Heart left ventricle (tissue), 16 donors: ENCODE measurements at regions of chr2 and their contacts with region 1.

Region 1: GRCh38 chr2:10408649-10409579 is 39.2 kb downstream of the ODC1 start:
- DNase-seq: peak; percentile 74 to 88 (median 80)
- ATAC-seq: peak; percentile 51 to 75 (median 62)
- H3K4me3 ChIP-seq: peak overlapping the region in 1 of 12 donors; percentile 15
- H3K27ac ChIP-seq: peak overlapping the region in 10 of 12 donors; percentile 14 to 85 (median 46)
- H3K4me1 ChIP-seq: peaks cover 16 to 71% (median 54%) of the 10 kb centered on the region in 12 donors
- H3K27me3 ChIP-seq: no peaks in the 10 kb centered on the region
- CTCF ChIP-seq: peak; percentile 89 to 98 (median 95)
- POLR2A ChIP-seq: no peak

Region 2: DNA sequence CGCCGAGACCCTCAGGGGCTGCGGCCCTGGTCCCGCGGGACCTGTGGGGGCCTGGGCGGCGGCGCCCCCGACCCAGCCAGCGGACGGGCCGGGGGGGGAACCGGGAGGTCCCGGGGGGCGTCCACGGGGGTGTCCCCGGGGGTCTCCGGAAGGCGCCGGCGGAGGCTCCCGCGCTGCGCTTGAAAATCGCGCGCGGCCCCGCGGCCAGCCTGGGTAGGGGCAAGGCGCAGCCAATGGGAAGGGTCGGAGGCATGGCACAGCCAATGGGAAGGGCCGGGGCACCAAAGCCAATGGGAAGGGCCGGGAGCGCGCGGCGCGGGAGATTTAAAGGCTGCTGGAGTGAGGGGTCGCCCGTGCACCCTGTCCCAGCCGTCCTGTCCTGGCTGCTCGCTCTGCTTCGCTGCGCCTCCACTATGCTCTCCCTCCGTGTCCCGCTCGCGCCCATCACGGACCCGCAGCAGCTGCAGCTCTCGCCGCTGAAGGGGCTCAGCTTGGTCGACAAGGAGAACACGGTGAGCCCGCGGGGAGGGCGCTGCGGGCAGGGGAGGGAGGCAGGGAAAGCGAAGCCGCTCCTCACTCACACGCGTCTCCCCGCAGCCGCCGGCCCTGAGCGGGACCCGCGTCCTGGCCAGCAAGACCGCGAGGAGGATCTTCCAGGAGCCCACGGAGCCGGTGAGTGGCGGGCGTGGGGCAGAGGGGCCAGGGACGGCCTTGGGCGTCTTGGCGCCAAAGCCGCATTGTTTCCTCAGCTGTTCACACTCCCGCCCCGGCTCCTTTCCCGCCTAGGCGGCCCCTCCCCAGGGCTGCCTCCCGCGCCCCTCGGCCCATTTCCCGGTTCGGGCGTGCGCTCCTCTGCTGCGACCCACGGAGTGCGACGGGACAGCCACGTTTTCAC is 286.3 kb before region 1 on chr2 and contains the start of gene RRM2:
- intact Hi-C with region 1: loop called in 5 of 10 experiments (anchors 2 to 5 kb)
- DNase-seq: peak; percentile 92 to 96 (median 94)
- ATAC-seq: peak; percentile 90 to 94 (median 93)
- H3K4me3 ChIP-seq: peak within 1 kb of the TSS; percentile 35 to 79 (median 54)
- H3K27ac ChIP-seq: no peak within 1 kb of the TSS
- H3K4me1 ChIP-seq: peaks cover 10 to 66% (median 21%) of the 10 kb centered on the region in 12 donors
- H3K27me3 ChIP-seq: peaks cover 8 to 24% (median 12%) of the 10 kb centered on the region in 9 donors
- CTCF ChIP-seq: peak in 2 of 12 donors; percentile 8 to 11
- POLR2A ChIP-seq: no peak
- total RNA-seq, gene RRM2: 0.09 to 32.6 (median 1.3) TPM in 8 of 9 donors, not detected in the other

Region 3: DNA sequence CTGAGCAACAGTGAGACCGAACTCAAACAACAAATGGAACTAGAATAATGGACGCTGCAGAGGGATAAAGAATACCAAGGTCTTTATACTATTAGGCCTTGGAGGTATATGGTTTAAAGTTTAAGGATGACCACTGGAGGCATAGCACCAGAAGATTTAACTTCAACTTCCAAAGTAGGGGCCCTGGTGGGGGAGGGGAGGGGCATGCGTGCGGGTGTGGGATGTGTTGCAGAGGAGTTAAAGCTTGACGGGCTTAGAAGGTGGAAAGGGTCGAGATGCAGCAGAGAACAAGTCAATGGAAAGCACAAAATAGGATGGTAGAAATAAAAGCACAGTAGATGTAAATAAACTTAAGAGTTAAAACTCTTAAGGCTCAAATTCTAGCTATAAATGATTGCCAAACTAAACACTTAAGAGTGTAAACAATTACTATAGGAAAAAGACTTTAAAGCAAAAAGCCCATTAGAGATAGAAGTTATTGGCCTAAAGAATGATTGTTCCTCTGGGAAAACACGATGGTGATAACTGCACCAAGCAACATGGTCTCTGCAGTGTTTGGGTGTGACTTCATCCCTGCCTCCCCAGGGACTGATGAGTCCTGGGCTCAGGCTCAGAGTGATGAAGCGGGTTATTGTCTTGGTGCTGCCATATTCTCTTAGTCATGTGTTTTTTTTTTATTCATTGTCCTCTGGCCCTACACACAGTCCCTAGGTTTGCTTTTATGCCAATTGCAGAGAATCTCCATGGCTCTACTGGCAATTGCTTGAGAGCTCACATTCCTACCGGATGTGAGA is 273.4 kb before region 1 on chr2:
- intact Hi-C with region 1: loop called in 4 of 10 experiments (anchors 5 kb)
- DNase-seq: no peak
- ATAC-seq: peak in 2 of 4 donors; percentile 34 to 67
- H3K4me3 ChIP-seq: no peak overlapping the region
- H3K27ac ChIP-seq: no peak overlapping the region
- H3K4me1 ChIP-seq: no peaks in the 10 kb centered on the region
- H3K27me3 ChIP-seq: no peaks in the 10 kb centered on the region
- CTCF ChIP-seq: no peak
- POLR2A ChIP-seq: no peak

Region 4: DNA sequence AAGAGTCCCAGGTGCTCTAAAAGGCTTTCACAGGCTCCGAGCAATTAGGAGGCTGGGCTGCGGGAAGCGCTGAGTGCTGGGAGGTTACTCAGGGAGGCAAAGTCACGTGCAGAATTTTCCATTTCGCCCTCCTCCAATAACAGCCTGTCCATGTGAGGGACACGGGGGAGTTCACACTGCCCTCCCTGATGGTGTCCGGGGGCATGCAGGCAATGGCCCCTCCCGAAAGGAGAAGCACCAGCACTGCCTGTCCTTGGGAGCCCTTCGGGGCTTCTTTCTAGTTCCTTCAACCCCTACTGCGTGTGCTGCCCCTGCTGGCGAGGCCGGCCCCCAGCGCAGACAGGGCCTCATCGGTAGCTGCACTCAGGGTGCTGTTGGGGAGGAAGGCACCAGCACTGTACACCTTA is 169.3 kb before region 1 on chr2:
- intact Hi-C with region 1: loop called in 2 of 10 experiments (anchors 10 kb)
- DNase-seq: peak in 1 of 5 donors; percentile 33
- ATAC-seq: peak in 1 of 4 donors; percentile 7
- H3K4me3 ChIP-seq: no peak overlapping the region
- H3K27ac ChIP-seq: no peak overlapping the region
- H3K4me1 ChIP-seq: peaks cover 0 to 32% (median 22%) of the 10 kb centered on the region in 12 donors
- H3K27me3 ChIP-seq: no peaks in the 10 kb centered on the region
- CTCF ChIP-seq: peak in 2 of 12 donors; percentile 15 to 24
- POLR2A ChIP-seq: no peak

Region 5: DNA sequence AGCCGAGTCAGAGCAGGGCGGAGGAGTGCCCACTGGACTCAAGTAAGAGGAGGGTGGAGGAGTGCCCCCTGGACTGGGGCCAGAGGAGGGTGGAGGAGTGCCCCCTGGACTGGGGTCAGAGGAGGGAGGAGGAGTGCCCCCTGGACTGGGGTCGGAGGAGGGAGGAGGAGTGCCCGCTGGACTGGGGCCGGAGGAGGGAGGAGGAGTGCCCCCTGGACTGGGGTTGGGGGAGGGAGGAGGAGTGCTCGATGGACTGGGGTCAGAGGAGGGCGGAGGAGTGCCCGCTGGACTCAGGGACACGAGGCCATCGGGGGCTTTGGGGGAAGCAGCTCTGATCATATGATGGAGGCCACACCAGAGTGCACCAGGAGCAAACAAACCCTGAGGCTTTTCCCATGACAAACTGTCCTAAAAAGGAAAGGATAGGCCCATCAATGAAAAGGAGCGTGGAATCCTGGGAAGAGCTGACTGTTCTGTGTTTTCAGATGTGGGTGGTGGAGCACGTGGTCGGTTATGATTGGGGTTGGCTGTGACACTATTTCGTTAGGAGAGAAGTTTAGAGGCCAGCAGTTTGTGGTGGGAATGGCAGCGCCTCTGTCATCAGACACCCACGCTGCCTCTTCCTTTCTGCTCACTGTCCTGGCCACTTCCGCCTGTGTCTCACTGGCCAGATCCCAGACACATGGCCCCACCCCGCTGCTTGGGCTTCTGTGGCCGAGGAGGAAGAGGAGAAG is 130.7 kb before region 1 on chr2:
- intact Hi-C with region 1: loop called in 1 of 10 experiments (anchors 10 kb)
- DNase-seq: peak in 4 of 5 donors; percentile 75 to 86 (median 80)
- ATAC-seq: peak; percentile 57 to 91 (median 87)
- H3K4me3 ChIP-seq: peak overlapping the region in 2 of 12 donors; percentile 13 to 25
- H3K27ac ChIP-seq: peak overlapping the region in 5 of 12 donors; percentile 11 to 89 (median 21)
- H3K4me1 ChIP-seq: peaks cover 0 to 33% (median 4%) of the 10 kb centered on the region in 12 donors
- H3K27me3 ChIP-seq: no peaks in the 10 kb centered on the region
- CTCF ChIP-seq: no peak
- POLR2A ChIP-seq: no peak

Region 6: GRCh38 chr2:10331027-10331701 is 77.8 kb before region 1 on chr2:
- intact Hi-C with region 1: loop called in 4 of 10 experiments (anchors 2 to 10 kb)
- DNase-seq: peak; percentile 56 to 84 (median 78)
- ATAC-seq: peak; percentile 53 to 77 (median 74)
- H3K4me3 ChIP-seq: peak overlapping the region in 9 of 12 donors; percentile 11 to 50 (median 35)
- H3K27ac ChIP-seq: peak overlapping the region in 11 of 12 donors; percentile 17 to 79 (median 57)
- H3K4me1 ChIP-seq: peaks cover 6 to 72% (median 43%) of the 10 kb centered on the region in 12 donors
- H3K27me3 ChIP-seq: no peaks in the 10 kb centered on the region
- CTCF ChIP-seq: peak in 1 of 12 donors; percentile 15
- POLR2A ChIP-seq: no peak

Region 7: DNA sequence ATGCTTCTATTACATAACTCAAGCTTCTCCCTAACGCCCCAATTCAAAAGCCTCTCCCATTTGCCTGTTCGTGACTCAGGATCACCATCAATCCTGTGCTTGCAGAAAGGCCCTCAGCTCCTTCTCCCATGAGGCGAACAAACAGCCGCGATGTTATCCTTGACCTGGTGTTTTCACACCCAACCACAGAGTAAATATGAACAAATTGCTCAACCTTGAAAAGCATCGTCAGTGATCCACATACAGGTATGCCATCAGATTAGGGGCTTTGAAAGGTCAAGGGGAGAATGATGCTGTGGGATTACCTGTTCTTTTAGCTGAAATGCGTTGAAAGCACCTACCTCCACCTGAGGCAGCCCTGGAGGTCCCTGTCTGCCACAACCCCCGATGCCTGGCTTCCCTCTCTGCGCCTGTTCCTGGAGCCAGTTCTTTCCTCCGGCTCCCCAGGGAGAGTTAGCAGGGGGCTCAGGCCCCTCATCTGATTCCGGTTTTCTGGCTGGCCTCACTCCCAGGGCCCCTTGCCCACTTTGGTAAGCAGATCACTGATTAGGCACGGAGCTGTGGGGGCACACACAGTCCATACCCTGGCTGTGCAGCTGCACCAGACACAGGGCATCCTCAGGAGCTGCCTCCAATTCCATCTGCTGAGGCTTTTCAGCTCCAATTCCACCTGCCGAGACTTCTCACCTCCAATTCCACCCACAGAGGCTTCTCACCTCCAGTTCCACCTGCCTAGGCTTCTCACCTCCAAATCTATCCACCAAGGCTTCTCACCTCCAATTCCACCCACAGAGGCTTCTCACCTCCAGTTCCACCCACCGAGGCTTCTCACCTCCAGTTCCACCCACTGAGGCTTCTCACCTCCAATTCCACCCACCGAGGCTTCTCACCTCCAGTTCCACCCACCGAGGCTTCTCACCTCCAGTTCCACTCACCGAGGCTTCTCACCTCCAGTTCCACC is 78.5 kb after region 1 on chr2:
- intact Hi-C with region 1: no loop called
- DNase-seq: no peak
- ATAC-seq: no peak
- H3K4me3 ChIP-seq: no peak overlapping the region
- H3K27ac ChIP-seq: no peak overlapping the region
- H3K4me1 ChIP-seq: no peaks in the 10 kb centered on the region
- H3K27me3 ChIP-seq: peaks cover 0 to 31% (median 7%) of the 10 kb centered on the region in 9 donors
- CTCF ChIP-seq: no peak
- POLR2A ChIP-seq: no peak

Region 8: DNA sequence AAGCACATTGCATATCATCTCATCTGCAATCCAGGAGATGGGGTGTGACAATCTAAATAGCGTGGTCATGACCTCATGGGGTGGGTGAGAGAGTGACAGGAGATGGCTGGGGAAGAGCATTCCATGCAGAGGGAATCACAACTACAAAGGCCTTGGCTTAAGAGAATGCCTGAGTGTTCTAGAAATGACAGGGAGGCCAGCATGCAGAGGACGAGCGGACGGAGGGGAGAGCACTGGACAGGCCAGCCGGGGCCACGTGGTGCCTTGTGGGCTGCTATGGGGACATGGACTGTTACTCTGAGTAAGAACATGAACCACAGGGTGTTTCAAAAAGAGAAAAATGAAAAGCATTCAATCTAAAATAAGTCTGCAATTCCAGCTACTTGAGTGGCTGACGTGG is 157.1 kb after region 1 on chr2:
- intact Hi-C with region 1: no loop called
- DNase-seq: no peak
- ATAC-seq: no peak
- H3K4me3 ChIP-seq: no peak overlapping the region
- H3K27ac ChIP-seq: no peak overlapping the region
- H3K4me1 ChIP-seq: peaks cover 0 to 9% (median 0%) of the 10 kb centered on the region in 12 donors
- H3K27me3 ChIP-seq: no peaks in the 10 kb centered on the region
- CTCF ChIP-seq: no peak
- POLR2A ChIP-seq: no peak